ENCODE measurements at regions of chr12 and their contacts with region 1.

Region 1: GRCh38 chr12:132904718-132905328 is 17.4 kb upstream of the CHFR start:
- DNase-seq: peak; percentile 92
- ATAC-seq: peak; percentile 14
- H3K4me3 Mint-ChIP-seq: no peak overlapping the region
- H3K27ac Mint-ChIP-seq: no peak overlapping the region
- H3K4me1 Mint-ChIP-seq: peaks cover 21% of the 10 kb centered on the region
- H3K27me3 Mint-ChIP-seq: peaks cover 15% of the 10 kb centered on the region

Region 2: GRCh38 chr12:132771126-132771838 is 133.5 kb before region 1 on chr12:
- CTCF ChIA-PET with region 1: interaction called, 13 read pairs
- DNase-seq: peak; percentile 59
- ATAC-seq: peak; percentile 64
- H3K4me3 Mint-ChIP-seq: no peak overlapping the region
- H3K27ac Mint-ChIP-seq: peak overlapping the region; percentile 65
- H3K4me1 Mint-ChIP-seq: peaks cover 32% of the 10 kb centered on the region
- H3K27me3 Mint-ChIP-seq: no peaks in the 10 kb centered on the region

Region 3: GRCh38 chr12:132812631-132813305 is 92.1 kb before region 1 on chr12:
- CTCF ChIA-PET with region 1: interaction called, 17 read pairs
- DNase-seq: peak; percentile 85
- ATAC-seq: peak; percentile 78
- H3K4me3 Mint-ChIP-seq: peak overlapping the region; percentile 18
- H3K27ac Mint-ChIP-seq: peak overlapping the region; percentile 85
- H3K4me1 Mint-ChIP-seq: peaks cover 34% of the 10 kb centered on the region
- H3K27me3 Mint-ChIP-seq: no peaks in the 10 kb centered on the region

Region 4: DNA sequence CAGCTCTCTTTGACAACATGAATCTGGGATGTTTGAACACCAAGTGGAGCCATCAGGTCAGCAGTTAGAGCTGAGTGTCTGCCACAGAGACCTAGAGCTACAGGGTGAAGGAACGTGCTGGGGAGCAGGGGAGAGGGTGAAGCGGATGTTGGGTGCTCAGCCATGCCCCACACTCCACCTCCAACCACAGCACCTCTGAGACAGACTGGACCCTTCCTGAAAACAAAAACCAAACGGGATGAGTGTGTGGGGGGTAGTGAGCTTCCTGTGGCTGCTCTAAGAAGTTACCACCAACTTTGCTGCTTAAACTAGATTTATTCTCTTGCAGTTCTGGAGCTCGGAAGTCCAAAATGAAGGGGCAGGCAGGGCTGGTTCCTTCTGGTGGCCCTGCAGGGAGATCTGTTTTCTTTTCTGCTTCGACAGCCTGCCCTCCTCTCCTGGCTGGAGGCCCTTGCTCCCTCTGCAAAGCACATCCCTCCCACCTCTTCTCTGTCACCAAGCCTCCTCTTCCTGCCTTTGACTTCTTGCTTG is 70.6 kb before region 1 on chr12:
- CTCF ChIA-PET with region 1: interaction called, 19 read pairs
- DNase-seq: peak; percentile 83
- ATAC-seq: peak; percentile 88
- H3K4me3 Mint-ChIP-seq: peak overlapping the region; percentile 64
- H3K27ac Mint-ChIP-seq: peak overlapping the region; percentile 94
- H3K4me1 Mint-ChIP-seq: peaks cover 46% of the 10 kb centered on the region
- H3K27me3 Mint-ChIP-seq: no peaks in the 10 kb centered on the region

Region 5: DNA sequence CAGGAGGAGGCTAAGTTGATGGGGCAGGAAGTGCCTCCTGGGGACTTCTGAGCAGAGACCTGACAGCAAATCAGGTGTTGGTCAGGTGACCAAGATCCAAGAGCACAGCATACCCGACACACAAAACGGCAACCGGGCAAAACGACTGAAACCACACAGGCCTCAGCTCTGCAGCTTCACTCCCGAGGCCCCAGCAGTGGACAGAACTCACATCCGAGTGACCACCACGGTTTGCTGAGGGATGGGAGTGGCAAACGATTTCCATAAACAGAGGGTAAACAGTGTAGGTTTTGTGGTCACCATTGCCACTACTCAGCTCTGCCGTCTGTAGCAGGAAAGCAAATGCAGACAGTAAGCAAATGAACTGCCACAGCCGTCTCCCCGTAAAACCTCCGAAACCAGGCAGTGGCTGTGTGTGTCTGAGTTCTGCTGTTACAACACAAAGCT is 31.8 kb before region 1 on chr12:
- CTCF ChIA-PET with region 1: interaction called, 15 read pairs
- DNase-seq: peak; percentile 82
- ATAC-seq: peak; percentile 88
- H3K4me3 Mint-ChIP-seq: peak overlapping the region; percentile 54
- H3K27ac Mint-ChIP-seq: peak overlapping the region; percentile 80
- H3K4me1 Mint-ChIP-seq: peaks cover 27% of the 10 kb centered on the region
- H3K27me3 Mint-ChIP-seq: no peaks in the 10 kb centered on the region

Region 6: DNA sequence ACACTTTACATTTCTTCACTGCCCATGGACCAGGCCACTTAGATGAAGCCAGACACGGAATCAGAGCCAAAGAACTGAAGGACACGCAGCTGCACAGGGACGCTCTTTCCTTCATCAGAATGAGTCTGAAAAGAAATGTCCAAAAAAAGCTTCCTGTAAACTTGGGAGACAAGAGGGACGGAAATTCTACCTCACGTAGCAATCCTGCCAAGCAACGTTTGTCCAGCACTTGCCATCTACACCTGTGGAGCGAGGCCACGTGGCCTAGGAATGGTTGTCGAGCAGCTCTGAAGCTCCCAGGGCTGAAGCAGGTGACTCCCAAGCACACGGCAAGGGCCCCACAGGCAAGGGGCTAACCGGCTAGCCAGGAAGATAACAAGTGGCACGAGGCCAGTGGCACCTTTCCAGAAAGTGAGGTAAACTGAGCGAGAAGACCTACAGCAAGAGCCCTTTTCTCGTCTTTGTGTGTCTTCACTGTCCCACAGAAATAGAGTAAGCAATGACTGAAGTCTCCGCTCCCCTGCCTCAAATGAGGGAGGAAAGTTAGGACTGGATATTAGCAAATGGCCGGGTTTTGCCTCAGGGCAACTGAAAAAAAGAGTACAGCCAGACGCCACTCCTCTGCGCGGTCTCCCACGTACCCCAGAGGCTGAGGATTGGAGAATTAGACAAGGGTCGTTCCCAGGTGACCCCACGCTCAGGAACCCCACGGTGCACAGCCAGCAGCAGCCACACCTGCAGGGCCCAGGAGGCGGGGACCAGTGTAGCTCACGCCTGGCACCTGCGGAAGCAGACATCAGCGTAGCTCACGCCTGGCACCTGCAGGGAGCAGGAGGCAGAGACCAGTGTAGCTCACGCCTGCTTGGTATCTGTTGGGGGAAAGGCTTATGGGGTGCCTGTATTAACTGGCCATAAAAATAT is 43.6 kb after region 1 on chr12:
- CTCF ChIA-PET with region 1: no interaction called
- DNase-seq: no peak
- ATAC-seq: no peak
- H3K4me3 Mint-ChIP-seq: no peak overlapping the region
- H3K27ac Mint-ChIP-seq: no peak overlapping the region
- H3K4me1 Mint-ChIP-seq: no peaks in the 10 kb centered on the region
- H3K27me3 Mint-ChIP-seq: no peaks in the 10 kb centered on the region

Region 7: DNA sequence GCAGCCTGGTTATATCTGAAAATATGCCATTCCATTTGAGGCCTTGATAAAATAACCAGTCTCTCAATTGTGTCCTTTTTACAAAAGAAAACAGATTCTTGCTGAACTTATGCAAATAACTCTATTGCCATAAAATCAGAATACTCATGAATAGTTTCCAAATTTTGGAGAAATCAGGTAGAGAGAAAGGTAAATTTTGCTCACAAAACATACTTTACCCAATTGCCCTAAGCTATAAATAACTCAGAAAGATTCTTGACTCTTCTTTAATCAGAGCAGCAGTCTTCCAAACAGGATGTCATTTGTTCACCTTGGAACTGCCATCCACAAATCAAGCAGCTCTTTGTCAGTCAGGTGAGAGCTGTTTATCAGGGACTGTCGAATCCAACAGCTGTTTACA is 93.9 kb after region 1 on chr12:
- CTCF ChIA-PET with region 1: no interaction called
- DNase-seq: no peak
- ATAC-seq: no peak
- H3K4me3 Mint-ChIP-seq: no peak overlapping the region
- H3K27ac Mint-ChIP-seq: no peak overlapping the region
- H3K4me1 Mint-ChIP-seq: no peaks in the 10 kb centered on the region
- H3K27me3 Mint-ChIP-seq: no peaks in the 10 kb centered on the region